CD4-positive, alpha-beta T cell (primary cell): ENCODE measurements at regions of chr13 and their contacts with region 1.

Region 1: GRCh38 chr13:88136098-88136790 is 465.1 kb downstream of the SLITRK5 start:
- DNase-seq: no peak
- ATAC-seq: no peak
- H3K4me3 ChIP-seq: no peak overlapping the region
- H3K4me3 Mint-ChIP-seq: no peak overlapping the region
- H3K27ac ChIP-seq: no peak overlapping the region
- H3K27ac Mint-ChIP-seq: no peak overlapping the region
- H3K4me1 ChIP-seq: no peaks in the 10 kb centered on the region
- H3K4me1 Mint-ChIP-seq: no peaks in the 10 kb centered on the region
- H3K27me3 ChIP-seq: no peaks in the 10 kb centered on the region
- H3K27me3 Mint-ChIP-seq: no peaks in the 10 kb centered on the region
- CTCF ChIP-seq: no peak

Region 2: DNA sequence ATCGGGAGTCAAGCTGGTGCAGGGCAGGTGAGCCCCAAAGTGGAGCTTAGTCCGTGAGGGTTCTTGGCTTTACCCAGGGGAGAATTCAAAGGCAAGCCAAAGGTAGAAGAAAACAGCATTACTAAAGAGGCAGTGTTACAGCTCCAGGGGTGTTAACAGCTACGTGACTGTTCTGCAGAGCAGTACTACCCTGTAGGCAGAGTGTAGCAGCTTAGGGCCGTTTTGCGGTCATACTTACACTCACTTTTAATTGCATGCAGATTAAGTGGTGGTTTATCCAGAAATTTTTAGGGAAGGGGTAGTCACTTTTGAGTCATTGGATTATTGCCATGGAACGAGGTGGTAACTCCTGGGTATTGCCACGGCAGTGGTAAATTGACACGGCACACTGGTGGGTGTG is 17.1 kb after region 1 on chr13:
- CTCF ChIA-PET with region 1: no interaction called
- POLR2A ChIA-PET with region 1: no interaction called
- intact Hi-C with region 1: loop called in 1 of 2 experiments (anchors 1 kb)
- DNase-seq: no peak
- ATAC-seq: no peak
- H3K4me3 ChIP-seq: no peak overlapping the region
- H3K4me3 Mint-ChIP-seq: no peak overlapping the region
- H3K27ac ChIP-seq: no peak overlapping the region
- H3K27ac Mint-ChIP-seq: no peak overlapping the region
- H3K4me1 ChIP-seq: no peaks in the 10 kb centered on the region
- H3K4me1 Mint-ChIP-seq: no peaks in the 10 kb centered on the region
- H3K27me3 ChIP-seq: no peaks in the 10 kb centered on the region
- H3K27me3 Mint-ChIP-seq: no peaks in the 10 kb centered on the region
- CTCF ChIP-seq: no peak

Region 3: DNA sequence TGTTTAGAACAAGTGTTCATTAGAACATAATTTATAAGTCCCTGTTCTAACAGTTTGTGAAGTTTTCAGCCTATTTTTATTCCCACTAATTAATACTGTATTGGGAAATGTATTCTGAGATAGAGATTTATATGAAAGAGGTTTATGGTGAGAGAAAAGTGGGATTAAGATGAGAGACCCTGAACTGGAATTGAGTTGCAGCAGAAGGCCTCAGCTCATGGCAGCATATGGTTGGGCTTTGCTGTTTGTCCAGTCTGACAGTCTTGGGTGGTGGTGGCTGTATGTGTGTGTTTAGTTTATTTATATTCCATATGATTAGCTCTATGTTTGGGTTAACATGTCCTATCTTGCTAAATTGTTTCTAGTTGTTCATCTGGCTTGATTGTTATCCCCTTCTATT is 110.0 kb after region 1 on chr13:
- CTCF ChIA-PET with region 1: no interaction called
- POLR2A ChIA-PET with region 1: no interaction called
- intact Hi-C with region 1: no loop called
- DNase-seq: no peak
- ATAC-seq: no peak
- H3K4me3 ChIP-seq: no peak overlapping the region
- H3K4me3 Mint-ChIP-seq: no peak overlapping the region
- H3K27ac ChIP-seq: no peak overlapping the region
- H3K27ac Mint-ChIP-seq: no peak overlapping the region
- H3K4me1 ChIP-seq: no peaks in the 10 kb centered on the region
- H3K4me1 Mint-ChIP-seq: no peaks in the 10 kb centered on the region
- H3K27me3 ChIP-seq: no peaks in the 10 kb centered on the region
- H3K27me3 Mint-ChIP-seq: no peaks in the 10 kb centered on the region
- CTCF ChIP-seq: no peak